HEK293T (cell line): ENCODE measurements at regions of chr5 and their contacts with region 1.

Region 1: GRCh38 chr5:169686137-169686536 is 49.1 kb downstream of the DOCK2 start:
- DNase-seq: no peak

Region 2: GRCh38 chr5:169701910-169702451 is 15.8 kb after region 1 on chr5:
- CTCF ChIA-PET with region 1: interaction called, 11 read pairs
- POLR2A ChIA-PET with region 1: no interaction called
- DNase-seq: peak; percentile 34

Region 3: GRCh38 chr5:170095646-170096045 is 409.5 kb after region 1 on chr5:
- CTCF ChIA-PET with region 1: no interaction called
- POLR2A ChIA-PET with region 1: no interaction called
- DNase-seq: no peak